ENCODE measurements at regions of chr2 and their contacts with region 1.

Region 1: DNA sequence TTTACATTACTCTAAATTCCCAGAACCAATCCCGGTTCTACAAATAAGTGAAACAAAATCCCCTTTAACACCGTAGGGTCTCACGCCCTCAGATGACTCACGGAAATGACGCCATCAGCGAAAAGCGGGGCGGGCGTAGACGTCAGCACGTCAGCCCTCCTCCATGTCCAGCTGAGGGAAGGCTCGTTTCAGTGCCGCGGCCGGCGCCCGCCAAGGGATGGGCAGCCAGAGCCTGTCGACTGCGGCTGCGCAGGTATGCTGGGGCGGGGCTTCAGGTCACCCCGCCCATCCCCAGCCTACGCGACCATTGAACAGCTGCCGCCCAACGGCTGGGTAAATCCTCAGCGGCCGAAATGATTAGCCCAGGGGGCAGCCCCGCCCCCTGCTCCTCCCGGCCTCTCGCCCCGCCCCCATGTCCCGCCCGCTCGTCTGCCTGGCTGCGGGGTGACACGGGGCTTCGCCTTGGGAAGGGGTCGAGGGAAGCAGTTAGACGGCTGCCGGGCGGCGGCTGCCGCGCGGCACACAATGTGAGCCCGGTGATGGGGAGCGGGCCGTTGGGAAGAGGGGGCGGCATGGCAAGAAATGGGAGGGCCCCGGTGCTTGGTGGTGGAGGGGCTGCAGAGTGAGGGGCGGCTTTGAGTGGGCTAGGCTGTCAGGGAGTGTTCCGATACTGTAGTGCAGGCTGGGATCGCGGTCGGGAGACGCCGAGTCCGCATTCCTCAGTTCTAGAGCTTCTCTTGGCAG is at the start of gene NBEAL1:
- DNase-seq: peak; percentile 86 to 98 (median 92)
- ATAC-seq: peak; percentile 89 to 95 (median 94)
- H3K4me3 ChIP-seq: peak within 1 kb of the TSS; percentile 91
- H3K4me3 Mint-ChIP-seq: peak within 1 kb of the TSS; percentile 86 to 92 (median 88)
- H3K27ac ChIP-seq: peak within 1 kb of the TSS; percentile 92
- H3K27ac Mint-ChIP-seq: peak within 1 kb of the TSS; percentile 86 to 88
- H3K4me1 ChIP-seq: peaks cover 2 to 15% of the 10 kb centered on the region in 2 experiments
- H3K4me1 Mint-ChIP-seq: peaks cover 39 to 50% (median 44%) of the 10 kb centered on the region in 3 donors
- H3K27me3 ChIP-seq: no peaks in the 10 kb centered on the region
- H3K27me3 Mint-ChIP-seq: no peaks in the 10 kb centered on the region
- total RNA-seq, gene NBEAL1: 11.0 to 17.9 (median 14.3) TPM

Region 2: DNA sequence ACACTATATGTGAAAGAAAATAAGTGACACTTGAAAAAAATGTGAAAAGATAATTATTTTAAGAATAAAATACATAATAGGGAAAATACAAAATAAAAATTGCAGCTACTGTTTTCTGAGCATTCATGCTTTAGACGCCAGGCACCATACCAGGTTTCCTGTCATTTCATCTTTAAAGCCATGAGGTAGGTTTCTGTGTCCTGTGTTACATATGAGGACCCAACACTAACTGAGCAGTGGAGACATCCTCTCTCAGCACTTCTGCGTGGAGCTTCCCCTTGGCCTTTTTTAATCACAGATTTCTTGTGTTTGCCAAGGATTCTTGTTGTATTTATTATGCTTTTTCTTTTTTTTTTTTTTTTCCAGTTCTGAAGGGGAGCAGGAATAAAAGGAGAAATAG is 262.6 kb before region 1 on chr2:
- CTCF ChIA-PET with region 1: no interaction called
- POLR2A ChIA-PET with region 1: interaction called in 1 of 2 experiments, 11 read pairs
- DNase-seq: peak in 2 of 35 experiments; percentile 10 to 33
- ATAC-seq: peak in 3 of 4 experiments; percentile 74 to 81 (median 80)
- H3K4me3 ChIP-seq: no peak overlapping the region
- H3K4me3 Mint-ChIP-seq: no peak overlapping the region
- H3K27ac ChIP-seq: no peak overlapping the region
- H3K27ac Mint-ChIP-seq: peak overlapping the region; percentile 66 to 87
- H3K4me1 ChIP-seq: peaks cover 10 to 32% of the 10 kb centered on the region in 2 experiments
- H3K4me1 Mint-ChIP-seq: peaks cover 49 to 74% (median 69%) of the 10 kb centered on the region in 3 donors
- H3K27me3 ChIP-seq: no peaks in the 10 kb centered on the region
- H3K27me3 Mint-ChIP-seq: no peaks in the 10 kb centered on the region

Region 3: GRCh38 chr2:202932425-202933138 is 82.0 kb before region 1 on chr2:
- CTCF ChIA-PET with region 1: no interaction called
- POLR2A ChIA-PET with region 1: no interaction called
- DNase-seq: no peak
- ATAC-seq: no peak
- H3K4me3 ChIP-seq: no peak overlapping the region
- H3K4me3 Mint-ChIP-seq: no peak overlapping the region
- H3K27ac ChIP-seq: no peak overlapping the region
- H3K27ac Mint-ChIP-seq: no peak overlapping the region
- H3K4me1 ChIP-seq: no peaks in the 10 kb centered on the region
- H3K4me1 Mint-ChIP-seq: peaks cover 0 to 13% (median 3%) of the 10 kb centered on the region in 3 donors
- H3K27me3 ChIP-seq: no peaks in the 10 kb centered on the region
- H3K27me3 Mint-ChIP-seq: no peaks in the 10 kb centered on the region

Region 4: DNA sequence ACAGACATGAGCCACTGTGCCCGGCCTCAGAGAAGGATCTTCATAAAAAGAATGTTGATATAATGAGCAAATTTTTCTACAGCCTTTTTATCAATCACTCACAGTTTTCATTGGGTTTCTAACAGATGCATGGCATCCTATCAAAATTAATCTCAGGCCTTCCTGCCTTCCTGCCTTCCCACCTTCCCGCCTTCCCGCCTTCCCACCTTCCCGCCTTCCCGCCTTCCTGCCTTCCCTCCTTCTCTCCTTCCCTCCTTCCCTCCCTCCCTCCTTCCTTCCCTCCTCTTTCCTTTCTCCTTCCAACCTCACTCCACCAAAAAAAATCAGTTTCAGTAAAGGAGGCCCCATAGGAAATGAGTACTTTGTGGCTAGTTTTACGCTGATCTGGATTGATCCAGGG is 54.1 kb before region 1 on chr2:
- CTCF ChIA-PET with region 1: no interaction called
- POLR2A ChIA-PET with region 1: no interaction called
- DNase-seq: no peak
- ATAC-seq: no peak
- H3K4me3 ChIP-seq: no peak overlapping the region
- H3K4me3 Mint-ChIP-seq: no peak overlapping the region
- H3K27ac ChIP-seq: no peak overlapping the region
- H3K27ac Mint-ChIP-seq: no peak overlapping the region
- H3K4me1 ChIP-seq: no peaks in the 10 kb centered on the region
- H3K4me1 Mint-ChIP-seq: no peaks in the 10 kb centered on the region
- H3K27me3 ChIP-seq: no peaks in the 10 kb centered on the region
- H3K27me3 Mint-ChIP-seq: no peaks in the 10 kb centered on the region

Region 5: GRCh38 chr2:203562268-203562667 is 547.6 kb after region 1 on chr2:
- CTCF ChIA-PET with region 1: no interaction called
- POLR2A ChIA-PET with region 1: no interaction called
- DNase-seq: no peak
- ATAC-seq: no peak
- H3K4me3 ChIP-seq: no peak overlapping the region
- H3K4me3 Mint-ChIP-seq: no peak overlapping the region
- H3K27ac ChIP-seq: no peak overlapping the region
- H3K27ac Mint-ChIP-seq: no peak overlapping the region
- H3K4me1 ChIP-seq: no peaks in the 10 kb centered on the region
- H3K4me1 Mint-ChIP-seq: no peaks in the 10 kb centered on the region
- H3K27me3 ChIP-seq: peaks cover 0 to 3% of the 10 kb centered on the region in 2 experiments
- H3K27me3 Mint-ChIP-seq: no peaks in the 10 kb centered on the region

Region 6: DNA sequence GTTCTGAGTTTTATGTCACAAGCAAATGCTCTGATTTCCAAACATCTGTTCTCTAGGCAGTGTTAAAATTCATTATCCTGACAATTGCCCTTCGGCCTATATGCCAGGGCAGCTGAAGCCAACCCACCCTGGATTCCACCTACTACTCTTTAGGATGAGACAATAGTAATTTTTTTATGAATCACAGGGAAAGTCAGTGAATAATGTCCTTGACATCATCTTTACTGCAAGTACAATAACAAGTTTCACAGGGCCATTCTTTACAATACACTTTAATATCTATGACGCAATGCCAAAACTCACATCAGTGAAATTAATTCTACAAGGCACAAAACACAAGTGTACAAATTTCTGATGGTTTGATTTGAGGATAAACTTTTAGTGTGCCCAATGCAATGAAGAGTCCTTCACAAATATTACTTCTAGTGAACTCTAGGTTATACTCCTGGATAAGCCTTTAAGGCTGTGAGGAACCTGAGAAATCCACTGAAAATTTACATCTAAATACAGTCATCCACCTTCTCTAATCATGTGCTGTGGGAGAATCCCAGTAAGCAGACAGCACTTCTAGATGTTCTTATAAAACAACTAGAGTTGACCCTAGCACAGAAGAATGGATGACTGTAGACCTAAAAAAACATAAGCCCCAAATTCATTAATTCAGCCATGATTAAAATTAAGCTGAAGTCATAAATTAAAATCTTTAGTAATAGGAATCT is 775.7 kb after region 1 on chr2:
- CTCF ChIA-PET with region 1: no interaction called
- POLR2A ChIA-PET with region 1: interaction called in 1 of 2 experiments, 11 read pairs
- DNase-seq: no peak
- ATAC-seq: no peak
- H3K4me3 ChIP-seq: no peak overlapping the region
- H3K4me3 Mint-ChIP-seq: no peak overlapping the region
- H3K27ac ChIP-seq: no peak overlapping the region
- H3K27ac Mint-ChIP-seq: no peak overlapping the region
- H3K4me1 ChIP-seq: no peaks in the 10 kb centered on the region
- H3K4me1 Mint-ChIP-seq: peaks cover 0 to 7% (median 2%) of the 10 kb centered on the region in 3 donors
- H3K27me3 ChIP-seq: no peaks in the 10 kb centered on the region
- H3K27me3 Mint-ChIP-seq: no peaks in the 10 kb centered on the region